HEK293 (cell line): ENCODE measurements at regions of chr21 and their contacts with region 1.

Region 1: GRCh38 chr21:39183237-39184007 is at the start of gene PSMG1:
- H3K4me3 ChIP-seq: peak within 1 kb of the TSS; percentile 89
- H3K27ac ChIP-seq: peak within 1 kb of the TSS; percentile 86
- H3K4me1 ChIP-seq: 0 out of 2 replicates have a peak, but pooled peaks cover 3% of the 10 kb centered on the region
- CTCF ChIP-seq: peak; percentile 66

Region 2: DNA sequence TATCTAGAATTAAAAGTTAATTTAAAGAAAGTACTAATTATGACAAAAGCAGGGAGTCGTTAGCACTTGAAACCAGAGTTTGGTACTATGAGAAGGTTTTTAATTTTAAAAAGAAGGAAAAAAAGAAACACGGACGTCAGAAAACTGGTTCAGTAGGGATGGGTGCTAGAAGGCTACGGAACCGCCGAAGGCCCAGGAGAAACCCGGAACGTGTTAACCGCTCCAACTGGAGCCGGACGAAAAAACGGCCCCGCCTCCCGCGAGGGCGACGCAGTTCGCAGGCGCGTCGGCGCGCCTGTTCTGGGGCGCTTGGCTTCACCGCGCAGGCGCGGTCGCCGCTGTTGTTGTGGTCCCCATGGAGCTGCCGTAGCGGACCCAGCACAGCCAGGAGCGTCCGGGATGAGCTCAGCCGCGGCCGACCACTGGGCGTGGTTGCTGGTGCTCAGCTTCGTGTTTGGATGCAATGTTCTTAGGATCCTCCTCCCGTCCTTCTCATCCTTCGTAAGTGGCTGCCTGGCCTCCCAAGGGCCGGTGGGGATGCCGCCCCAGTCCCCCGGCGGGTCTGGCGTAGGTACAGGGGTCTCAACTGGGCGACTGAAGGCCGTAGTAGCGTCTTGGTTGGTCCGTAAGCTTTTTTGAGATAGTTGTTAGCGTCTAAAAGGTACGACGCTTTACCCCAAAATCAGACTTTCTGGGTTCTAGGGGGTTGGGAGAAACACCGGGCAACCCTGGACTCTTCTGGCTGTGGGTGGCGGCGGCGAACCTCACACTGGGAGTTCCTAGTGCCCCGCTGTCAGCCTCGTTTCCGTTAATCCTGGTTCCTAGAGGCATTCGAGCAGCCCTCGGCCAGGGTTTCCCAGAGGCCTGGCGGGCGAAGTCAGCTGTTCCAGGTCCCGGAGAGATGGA is 196.8 kb after region 1 on chr21:
- CTCF ChIA-PET with region 1: no interaction called
- POLR2A ChIA-PET with region 1: interaction called, 12 read pairs
- H3K4me3 ChIP-seq: peak overlapping the region; percentile 72
- H3K27ac ChIP-seq: peak overlapping the region; percentile 53
- H3K4me1 ChIP-seq: peaks cover 2% of the 10 kb centered on the region; the same call in 1 of the 2 replicates
- CTCF ChIP-seq: no peak